Prostate gland (tissue), 2 donors: ENCODE measurements at regions of chr15 and their contacts with region 1.

Region 1: GRCh38 chr15:55630858-55631257 is 42.7 kb upstream of the PYGO1 start:
- DNase-seq: no peak
- H3K4me3 ChIP-seq: no peak overlapping the region
- H3K27ac ChIP-seq: no peak overlapping the region
- H3K4me1 ChIP-seq: no peaks in the 10 kb centered on the region
- H3K27me3 ChIP-seq: no peaks in the 10 kb centered on the region
- CTCF ChIP-seq: no peak
- POLR2A ChIP-seq: no peak

Region 2: GRCh38 chr15:55457401-55458022 is 173.3 kb before region 1 on chr15:
- intact Hi-C with region 1: no loop called
- DNase-seq: no peak
- H3K4me3 ChIP-seq: no peak overlapping the region
- H3K27ac ChIP-seq: no peak overlapping the region
- H3K4me1 ChIP-seq: no peaks in the 10 kb centered on the region
- H3K27me3 ChIP-seq: no peaks in the 10 kb centered on the region
- CTCF ChIP-seq: no peak
- POLR2A ChIP-seq: no peak

Region 3: DNA sequence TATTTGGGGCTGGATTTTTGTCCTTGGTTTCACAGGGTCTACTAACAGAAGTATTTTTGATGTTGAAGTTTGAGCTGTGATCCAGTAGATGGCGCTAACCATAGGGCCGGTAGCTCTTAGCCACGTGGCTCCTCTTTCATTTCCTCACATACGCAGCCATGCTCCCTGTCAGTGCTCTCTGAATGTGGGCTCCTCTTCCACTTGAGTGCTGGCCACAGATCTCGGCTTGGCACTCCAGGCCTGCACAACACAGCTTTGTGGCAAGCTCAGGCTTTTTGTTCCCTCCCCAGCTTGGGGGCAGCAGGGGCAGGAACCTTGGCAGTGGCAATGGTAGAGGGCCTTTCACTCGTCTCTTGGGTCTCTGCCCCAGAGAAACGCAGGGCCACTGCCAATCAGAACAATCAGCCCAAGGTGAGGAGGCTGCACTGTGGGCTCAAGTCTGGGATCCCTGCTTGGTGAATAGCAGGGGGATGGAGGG is 104.3 kb before region 1 on chr15:
- intact Hi-C with region 1: loop called (anchors 10 kb)
- DNase-seq: no peak
- H3K4me3 ChIP-seq: no peak overlapping the region
- H3K27ac ChIP-seq: no peak overlapping the region
- H3K4me1 ChIP-seq: no peaks in the 10 kb centered on the region
- H3K27me3 ChIP-seq: no peaks in the 10 kb centered on the region
- CTCF ChIP-seq: peak in 3 of 4 experiments; percentile 37 to 54 (median 52)
- POLR2A ChIP-seq: no peak

Region 4: DNA sequence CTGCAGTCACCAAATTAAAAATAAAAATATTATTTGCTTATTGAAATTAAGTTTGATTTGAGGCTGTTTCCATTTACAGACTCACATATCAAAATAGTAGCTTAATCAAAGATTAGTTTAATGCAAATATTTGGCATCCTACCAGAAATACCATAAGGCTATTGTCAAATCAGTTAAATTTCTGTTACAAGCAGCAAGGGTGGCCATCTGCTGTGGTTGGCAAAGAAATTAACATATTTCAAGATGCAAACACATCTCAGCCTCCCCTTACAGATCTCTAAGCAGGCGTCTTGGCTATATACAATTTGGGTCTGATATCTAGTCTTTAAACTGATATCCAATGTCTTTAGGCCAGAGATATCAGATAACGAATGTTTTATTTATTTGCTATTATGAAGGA is 445.8 kb after region 1 on chr15:
- intact Hi-C with region 1: no loop called
- DNase-seq: no peak
- H3K4me3 ChIP-seq: no peak overlapping the region
- H3K27ac ChIP-seq: no peak overlapping the region
- H3K4me1 ChIP-seq: no peaks in the 10 kb centered on the region
- H3K27me3 ChIP-seq: no peaks in the 10 kb centered on the region
- CTCF ChIP-seq: no peak
- POLR2A ChIP-seq: no peak